Motor neuron (in vitro differentiated cells): ENCODE measurements at regions of chr4 and their contacts with region 1.

Region 1: DNA sequence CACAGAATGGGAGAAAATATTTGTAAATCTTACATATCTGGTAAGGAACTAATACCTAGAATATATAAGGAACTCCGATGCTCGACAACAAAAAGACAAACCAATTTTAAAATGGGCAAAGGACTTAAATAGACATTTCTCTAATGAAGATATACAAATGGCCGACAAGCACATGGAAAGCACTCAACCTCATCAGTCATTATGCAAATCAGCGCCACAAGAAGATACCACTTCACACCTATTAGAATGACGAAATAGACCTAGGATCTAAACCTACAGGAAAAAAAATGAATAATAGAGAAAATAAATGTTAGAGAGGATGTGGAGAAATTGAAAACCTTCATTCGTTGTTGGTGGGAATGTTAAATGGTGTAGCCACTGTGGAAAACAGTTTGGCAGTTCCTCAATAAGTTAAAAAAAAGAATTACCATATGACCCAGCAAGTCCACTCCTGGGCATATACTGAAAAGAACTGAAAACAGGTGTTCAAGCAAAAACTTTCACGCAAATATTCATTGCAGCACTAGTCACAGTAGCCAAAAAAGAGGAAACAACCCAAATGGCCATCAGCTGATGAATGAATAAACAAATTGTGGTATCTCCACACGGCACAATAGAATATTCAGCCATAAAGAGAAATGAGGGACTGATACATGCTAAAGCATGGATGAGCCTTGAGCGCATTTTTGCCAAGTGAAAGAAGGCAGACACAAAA is 57.3 kb upstream of the WDR19 start:
- ATAC-seq: no peak
- H3K4me3 ChIP-seq: no peak overlapping the region
- H3K27ac ChIP-seq: no peak overlapping the region
- H3K4me1 ChIP-seq: no peaks in the 10 kb centered on the region

Region 2: GRCh38 chr4:38889143-38889542 is 235.9 kb before region 1 on chr4:
- in situ Hi-C with region 1: loop called in 1 of 9 experiments (anchors 25 kb)
- ATAC-seq: peak in 6 of 8 experiments; percentile 35 to 79 (median 50)
- H3K4me3 ChIP-seq: no peak overlapping the region
- H3K27ac ChIP-seq: no peak overlapping the region
- H3K4me1 ChIP-seq: peaks cover 0 to 4% of the 10 kb centered on the region in 2 donors

Region 3: GRCh38 chr4:38902695-38903094 is 222.3 kb before region 1 on chr4:
- in situ Hi-C with region 1: loop called in 6 of 9 experiments (anchors 10 to 25 kb)
- ATAC-seq: peak; percentile 46 to 88 (median 70)
- H3K4me3 ChIP-seq: no peak overlapping the region
- H3K27ac ChIP-seq: no peak overlapping the region
- H3K4me1 ChIP-seq: peaks cover 11 to 23% of the 10 kb centered on the region in 2 donors

Region 4: DNA sequence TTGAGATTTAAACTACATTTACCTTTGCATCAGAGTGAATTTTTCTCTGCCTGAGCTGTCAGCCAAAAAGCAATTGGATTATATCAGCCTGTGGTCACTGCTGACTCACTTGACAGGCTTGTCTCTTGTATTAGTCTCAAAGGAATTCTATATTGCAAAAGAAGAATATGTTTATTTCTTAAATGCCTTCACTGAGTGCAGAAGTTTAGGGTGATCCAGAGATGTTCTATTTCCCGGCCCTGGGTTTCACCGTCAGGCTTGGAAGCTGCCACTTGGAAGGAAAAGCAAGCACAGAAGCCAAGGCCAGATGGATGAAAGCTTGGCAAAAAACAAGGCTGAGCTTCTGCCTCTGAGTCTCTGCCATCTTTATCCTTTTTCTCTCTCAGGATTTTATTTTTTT is 176.5 kb before region 1 on chr4:
- in situ Hi-C with region 1: loop called in 1 of 9 experiments (anchors 25 kb)
- ATAC-seq: peak in 5 of 8 experiments; percentile 5 to 90 (median 49)
- H3K4me3 ChIP-seq: no peak overlapping the region
- H3K27ac ChIP-seq: no peak overlapping the region
- H3K4me1 ChIP-seq: peaks cover 45 to 79% of the 10 kb centered on the region in 2 donors

Region 5: GRCh38 chr4:39020130-39020529 is 104.9 kb before region 1 on chr4:
- in situ Hi-C with region 1: no loop called
- ATAC-seq: no peak
- H3K4me3 ChIP-seq: no peak overlapping the region
- H3K27ac ChIP-seq: no peak overlapping the region
- H3K4me1 ChIP-seq: no peaks in the 10 kb centered on the region